ENCODE measurements at regions of chr10 and their contacts with region 1.

Region 1: DNA sequence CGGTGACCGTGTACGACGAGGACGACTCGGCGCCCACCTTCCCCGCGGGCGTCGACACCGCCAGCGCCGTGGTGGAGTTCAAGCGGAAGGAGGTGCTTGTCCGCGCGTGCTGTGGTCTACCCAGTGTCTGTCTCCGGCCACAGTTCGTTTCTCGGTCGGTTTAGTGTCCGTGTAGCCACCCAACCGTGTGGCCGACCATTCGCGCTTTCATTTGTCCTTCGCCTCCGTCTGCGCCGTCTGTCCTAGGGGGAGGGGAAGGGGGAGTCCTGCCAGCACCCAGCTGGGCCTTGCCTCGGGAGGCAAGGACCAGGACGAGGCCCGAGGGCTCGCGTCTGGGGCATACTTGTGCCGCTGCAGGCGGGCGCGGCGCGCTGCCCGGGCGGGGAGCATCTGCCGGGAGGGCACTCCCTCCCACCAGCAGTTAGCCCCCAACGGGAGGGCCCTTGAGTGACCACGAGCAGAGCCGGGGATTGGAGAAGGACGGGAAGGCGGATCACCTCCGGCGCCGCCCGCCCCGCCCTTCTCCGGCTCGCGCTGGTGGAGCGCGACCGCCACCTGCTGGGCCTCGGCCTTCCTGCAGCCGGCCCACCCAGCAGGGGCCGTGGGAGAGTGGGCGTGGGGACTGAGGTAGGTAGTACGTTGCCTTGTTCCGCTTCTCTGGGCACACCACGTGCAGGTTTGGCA is 28.4 kb downstream of the RET start:
- DNase-seq: peak; percentile 80 to 86
- ATAC-seq: peak; percentile 95 to 97 (median 96)
- H3K4me3 ChIP-seq: peak overlapping the region; percentile 71
- H3K27ac ChIP-seq: no peak overlapping the region
- H3K4me1 ChIP-seq: no peaks in the 10 kb centered on the region
- H3K27me3 ChIP-seq: peaks cover 0 to 29% (median 2%) of the 10 kb centered on the region in 3 donors
- CTCF ChIP-seq: peak; percentile 98

Region 2: GRCh38 chr10:42177077-42177792 is 928.0 kb before region 1 on chr10:
- intact Hi-C with region 1: loop called in 1 of 2 experiments (anchors 10 kb)
- DNase-seq: peak in 1 of 2 donors; percentile 53
- ATAC-seq: no peak
- H3K4me3 ChIP-seq: no peak overlapping the region
- H3K27ac ChIP-seq: no peak overlapping the region
- H3K4me1 ChIP-seq: no peaks in the 10 kb centered on the region
- H3K27me3 ChIP-seq: peaks cover 0 to 42% (median 2%) of the 10 kb centered on the region in 3 donors
- CTCF ChIP-seq: no peak

Region 3: DNA sequence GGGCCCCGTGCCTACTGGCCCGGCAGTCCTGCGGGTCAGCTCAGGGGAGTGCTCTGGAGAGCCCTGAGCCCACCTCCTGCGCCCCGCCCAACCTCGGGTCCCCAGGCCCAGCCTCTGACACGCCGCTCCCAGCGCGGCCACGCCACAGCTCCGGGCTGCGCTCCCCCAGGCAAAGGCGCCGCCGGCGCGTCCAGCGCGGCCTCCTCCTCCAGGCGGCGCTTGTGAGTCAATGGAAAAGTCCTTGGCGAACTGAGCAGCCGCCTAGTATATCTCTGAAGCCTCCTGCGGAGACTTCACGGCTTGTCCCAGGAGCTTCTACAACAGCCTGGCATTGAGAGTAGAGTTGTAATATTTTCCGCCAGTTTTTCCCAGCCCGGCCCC is 352.1 kb before region 1 on chr10:
- intact Hi-C with region 1: loop called (anchors 5 kb)
- DNase-seq: peak; percentile 83 to 89
- ATAC-seq: peak; percentile 72 to 91 (median 84)
- H3K4me3 ChIP-seq: peak overlapping the region; percentile 71
- H3K27ac ChIP-seq: no peak overlapping the region
- H3K4me1 ChIP-seq: peaks cover 16% of the 10 kb centered on the region
- H3K27me3 ChIP-seq: peaks cover 0 to 72% (median 14%) of the 10 kb centered on the region in 3 donors
- CTCF ChIP-seq: peak; percentile 88

Region 4: GRCh38 chr10:42836768-42837468 is 268.3 kb before region 1 on chr10:
- intact Hi-C with region 1: no loop called
- DNase-seq: no peak
- ATAC-seq: no peak
- H3K4me3 ChIP-seq: peak overlapping the region; percentile 55
- H3K27ac ChIP-seq: no peak overlapping the region
- H3K4me1 ChIP-seq: no peaks in the 10 kb centered on the region
- H3K27me3 ChIP-seq: peaks cover 0 to 19% (median 8%) of the 10 kb centered on the region in 3 donors
- CTCF ChIP-seq: no peak

Region 5: GRCh38 chr10:42866115-42866995 is 238.9 kb before region 1 on chr10:
- intact Hi-C with region 1: loop called (anchors 1 to 2 kb)
- DNase-seq: peak; percentile 81 to 92
- ATAC-seq: peak; percentile 100
- H3K4me3 ChIP-seq: peak overlapping the region; percentile 51
- H3K27ac ChIP-seq: no peak overlapping the region
- H3K4me1 ChIP-seq: no peaks in the 10 kb centered on the region
- H3K27me3 ChIP-seq: peaks cover 0 to 11% (median 3%) of the 10 kb centered on the region in 3 donors
- CTCF ChIP-seq: peak; percentile 82

Region 6: GRCh38 chr10:43000651-43001423 is 104.4 kb before region 1 on chr10:
- intact Hi-C with region 1: no loop called
- DNase-seq: peak in 1 of 2 donors; percentile 35
- ATAC-seq: no peak
- H3K4me3 ChIP-seq: no peak overlapping the region
- H3K27ac ChIP-seq: no peak overlapping the region
- H3K4me1 ChIP-seq: no peaks in the 10 kb centered on the region
- H3K27me3 ChIP-seq: no peaks in the 10 kb centered on the region
- CTCF ChIP-seq: no peak

Region 7: GRCh38 chr10:43202224-43202656 is 97.0 kb after region 1 on chr10:
- intact Hi-C with region 1: no loop called
- DNase-seq: peak in 1 of 2 donors; percentile 59
- ATAC-seq: peak in 3 of 4 donors; percentile 39 to 63 (median 51)
- H3K4me3 ChIP-seq: peak overlapping the region; percentile 52
- H3K27ac ChIP-seq: no peak overlapping the region
- H3K4me1 ChIP-seq: no peaks in the 10 kb centered on the region
- H3K27me3 ChIP-seq: no peaks in the 10 kb centered on the region
- CTCF ChIP-seq: peak; percentile 36

Measured in psoas muscle (tissue), 8 donors.